Activated CD8-positive, alpha-beta T cell treated with anti-CD3 and anti-CD28 coated beads for 36 hours (primary cell): ENCODE measurements at regions of chr10 and their contacts with region 1.

Region 1: GRCh38 chr10:74151056-74151878 is at the start of gene ADK:
- DNase-seq: peak; percentile 100
- ATAC-seq: peak; percentile 98
- H3K4me3 Mint-ChIP-seq: no peak within 1 kb of the TSS
- H3K27ac Mint-ChIP-seq: no peak within 1 kb of the TSS
- H3K4me1 Mint-ChIP-seq: peaks cover 28% of the 10 kb centered on the region
- H3K27me3 Mint-ChIP-seq: no peaks in the 10 kb centered on the region
- CTCF ChIP-seq: peak; percentile 32
- total RNA-seq, gene ADK: 56.9 to 57.5 TPM

Region 2: DNA sequence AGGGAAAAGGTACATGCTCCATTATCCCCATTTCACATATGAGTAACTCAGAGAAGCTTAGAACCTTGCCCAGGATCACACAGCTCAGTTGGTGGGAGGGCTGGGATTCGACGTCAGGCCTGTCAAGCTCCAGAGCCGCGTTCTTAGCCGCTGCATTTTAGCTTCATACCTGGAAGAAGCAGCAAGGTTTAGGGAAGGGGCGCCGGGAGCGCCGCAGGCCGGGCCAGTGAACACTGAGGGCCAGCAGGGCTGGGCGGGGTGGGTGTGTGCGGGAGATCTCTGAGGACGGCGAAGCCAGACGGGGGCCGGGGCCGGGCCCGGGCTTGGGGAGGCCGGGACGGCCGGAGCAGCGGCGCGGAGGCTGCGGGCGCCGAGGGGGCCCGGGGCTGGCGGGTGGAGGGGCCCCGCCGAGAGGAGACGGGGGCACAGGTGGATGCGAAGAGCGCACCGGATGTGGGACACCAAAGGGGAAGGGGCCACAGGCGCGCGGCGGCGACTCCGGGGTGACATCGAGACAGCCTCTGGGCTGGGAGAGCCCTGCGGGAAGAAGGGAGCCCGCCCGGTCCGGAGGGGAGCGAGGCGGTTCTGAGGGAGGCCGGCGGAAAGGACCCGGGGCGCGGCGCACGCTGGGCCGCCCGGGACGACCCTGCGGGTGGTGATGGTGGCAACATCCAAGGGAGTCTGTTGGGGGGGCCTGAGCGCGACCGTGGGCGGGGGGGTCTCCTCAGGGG is 340.4 kb before region 1 on chr10:
- CTCF ChIA-PET with region 1: no interaction called
- POLR2A ChIA-PET with region 1: no interaction called
- intact Hi-C with region 1: no loop called
- DNase-seq: peak; percentile 65
- ATAC-seq: peak; percentile 15
- H3K4me3 Mint-ChIP-seq: peak overlapping the region; percentile 82
- H3K27ac Mint-ChIP-seq: peak overlapping the region; percentile 98
- H3K4me1 Mint-ChIP-seq: peaks cover 44% of the 10 kb centered on the region
- H3K27me3 Mint-ChIP-seq: no peaks in the 10 kb centered on the region
- CTCF ChIP-seq: no peak

Region 3: GRCh38 chr10:73899423-73899822 is 251.8 kb before region 1 on chr10:
- CTCF ChIA-PET with region 1: no interaction called
- POLR2A ChIA-PET with region 1: no interaction called
- intact Hi-C with region 1: no loop called
- DNase-seq: no peak
- ATAC-seq: no peak
- H3K4me3 Mint-ChIP-seq: no peak overlapping the region
- H3K27ac Mint-ChIP-seq: no peak overlapping the region
- H3K4me1 Mint-ChIP-seq: no peaks in the 10 kb centered on the region
- H3K27me3 Mint-ChIP-seq: peaks cover 19% of the 10 kb centered on the region
- CTCF ChIP-seq: no peak

Region 4: GRCh38 chr10:74058658-74059057 is 92.6 kb before region 1 on chr10:
- CTCF ChIA-PET with region 1: no interaction called
- POLR2A ChIA-PET with region 1: no interaction called
- intact Hi-C with region 1: no loop called
- DNase-seq: peak; percentile 50
- ATAC-seq: peak; percentile 27
- H3K4me3 Mint-ChIP-seq: no peak overlapping the region
- H3K27ac Mint-ChIP-seq: no peak overlapping the region
- H3K4me1 Mint-ChIP-seq: peaks cover 33% of the 10 kb centered on the region
- H3K27me3 Mint-ChIP-seq: no peaks in the 10 kb centered on the region
- CTCF ChIP-seq: no peak

Region 5: DNA sequence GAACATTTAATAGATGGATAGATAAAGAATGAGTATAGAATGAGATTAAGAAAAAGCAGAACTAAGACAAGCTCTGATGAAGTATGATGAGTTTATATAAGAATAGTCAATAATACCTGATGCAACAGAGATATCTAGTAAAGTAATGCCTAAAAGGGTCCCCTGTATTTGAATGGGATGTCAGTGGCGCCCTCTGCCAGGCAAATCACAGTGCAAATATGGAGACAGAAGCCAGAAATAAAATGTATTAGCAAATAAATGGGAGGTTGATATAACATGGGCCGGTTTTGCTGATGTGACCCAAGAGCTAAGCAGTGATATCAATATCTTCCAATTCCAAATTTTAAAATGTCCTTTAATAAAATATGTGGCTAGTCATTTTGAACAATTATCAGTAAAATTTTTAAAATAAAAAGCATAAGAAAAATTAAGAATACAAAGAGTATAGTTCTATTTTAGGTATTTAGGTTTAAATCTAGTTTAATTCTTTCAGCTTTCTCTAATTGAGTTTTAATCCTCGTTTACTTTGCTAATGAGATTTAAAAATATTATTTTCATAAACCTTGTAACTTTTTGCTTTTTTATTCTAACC is 62.4 kb after region 1 on chr10:
- CTCF ChIA-PET with region 1: interaction called, 12 read pairs
- POLR2A ChIA-PET with region 1: interaction called, 3 read pairs
- intact Hi-C with region 1: no loop called
- DNase-seq: peak; percentile 76
- ATAC-seq: peak; percentile 53
- H3K4me3 Mint-ChIP-seq: no peak overlapping the region
- H3K27ac Mint-ChIP-seq: no peak overlapping the region
- H3K4me1 Mint-ChIP-seq: peaks cover 12% of the 10 kb centered on the region
- H3K27me3 Mint-ChIP-seq: no peaks in the 10 kb centered on the region
- CTCF ChIP-seq: peak; percentile 68